ENCODE measurements at regions of chr1 and their contacts with region 1.

Region 1: DNA sequence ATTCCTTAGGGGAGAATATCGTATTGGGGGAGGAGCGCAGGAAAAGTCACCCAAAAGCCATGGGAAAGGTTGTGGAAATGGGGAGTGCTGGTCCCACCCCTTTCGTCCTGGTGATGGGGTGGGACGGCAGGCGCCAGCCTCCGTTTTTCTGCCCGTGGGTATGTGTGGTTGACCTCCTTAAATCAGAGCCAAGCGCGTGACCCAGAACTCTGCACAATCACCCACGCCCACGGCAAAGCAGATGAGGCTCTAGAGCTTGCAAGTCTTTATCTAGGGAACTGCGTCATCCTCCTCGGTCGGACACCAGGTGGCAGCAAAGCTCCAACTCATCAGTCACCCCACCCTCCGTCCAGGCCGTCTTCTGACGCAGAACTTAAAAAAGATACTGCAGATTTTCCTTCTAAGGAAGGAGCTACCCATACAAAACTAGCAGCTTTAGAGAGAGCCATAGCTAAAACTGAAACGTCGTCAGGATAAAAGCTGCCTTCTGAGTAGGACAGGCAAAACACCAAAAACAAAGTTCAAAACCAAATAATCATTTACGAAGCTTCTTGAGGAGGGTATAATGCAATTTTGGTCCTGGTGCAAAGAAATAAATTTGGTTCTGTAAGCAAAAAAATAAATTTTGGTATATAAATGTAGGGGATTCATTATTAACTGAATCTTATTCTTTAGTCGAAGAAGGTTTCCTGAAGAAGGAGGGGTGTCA is 62.0 kb downstream of the TBX19 start:
- DNase-seq: peak; percentile 97
- H3K4me3 ChIP-seq: peak overlapping the region in 3 of 4 donors; percentile 2 to 32 (median 20)
- H3K27ac ChIP-seq: peak overlapping the region; percentile 48 to 72 (median 61)
- H3K4me1 ChIP-seq: peaks cover 0 to 26% (median 19%) of the 10 kb centered on the region in 4 donors
- H3K27me3 ChIP-seq: no peaks in the 10 kb centered on the region
- CTCF ChIP-seq: peak; percentile 70 to 82 (median 76)
- EP300 ChIP-seq: no peak
- POLR2A ChIP-seq: no peak

Region 2: DNA sequence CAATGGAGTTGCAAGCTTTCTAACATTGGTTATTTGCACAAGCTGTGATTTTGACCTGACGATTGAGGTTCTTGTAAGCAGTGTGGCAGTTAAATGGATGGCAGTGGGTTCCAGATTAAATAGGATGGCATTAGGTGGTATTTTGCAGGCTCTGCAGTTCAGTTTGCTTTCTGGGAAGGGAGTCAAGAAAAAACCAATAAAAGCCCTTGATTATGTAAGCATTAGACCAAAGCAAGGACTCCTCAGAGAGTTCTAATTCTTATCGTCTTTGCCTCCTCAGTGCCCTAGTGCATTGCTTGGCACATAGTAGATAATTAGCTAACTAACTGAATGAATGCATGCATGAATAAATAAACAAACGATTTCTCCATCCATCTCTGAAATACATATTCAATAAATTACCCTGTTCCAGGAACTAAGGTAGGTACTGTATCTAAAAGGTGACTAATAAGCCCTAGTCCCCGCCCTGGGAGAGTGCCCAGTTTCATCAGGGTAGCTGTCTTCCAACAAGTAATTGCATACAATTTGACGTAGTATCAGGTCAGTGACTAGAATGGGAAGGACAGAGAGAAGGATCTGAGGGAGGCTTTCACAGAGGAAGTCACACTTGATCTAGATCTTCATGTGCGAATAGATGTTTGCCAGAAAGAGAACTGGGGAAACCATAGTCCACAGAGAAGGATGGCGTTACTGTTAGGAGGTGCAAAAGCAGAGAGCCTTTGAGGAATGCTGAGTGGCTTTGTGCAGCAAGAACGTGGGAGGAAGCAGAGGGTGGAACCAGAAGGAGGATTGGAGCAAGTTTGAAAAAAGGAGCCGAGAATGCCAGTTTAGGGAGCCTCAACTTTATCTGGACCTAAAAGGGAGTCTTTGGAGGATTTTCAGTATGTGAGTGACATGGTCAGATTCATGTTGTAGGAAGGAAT is 49.3 kb after region 1 on chr1:
- intact Hi-C with region 1: no loop called
- DNase-seq: peak; percentile 86
- H3K4me3 ChIP-seq: no peak overlapping the region
- H3K27ac ChIP-seq: peak overlapping the region in 3 of 4 donors; percentile 57 to 68 (median 60)
- H3K4me1 ChIP-seq: peaks cover 0 to 41% (median 30%) of the 10 kb centered on the region in 4 donors
- H3K27me3 ChIP-seq: no peaks in the 10 kb centered on the region
- CTCF ChIP-seq: no peak
- EP300 ChIP-seq: no peak
- POLR2A ChIP-seq: no peak

Region 3: DNA sequence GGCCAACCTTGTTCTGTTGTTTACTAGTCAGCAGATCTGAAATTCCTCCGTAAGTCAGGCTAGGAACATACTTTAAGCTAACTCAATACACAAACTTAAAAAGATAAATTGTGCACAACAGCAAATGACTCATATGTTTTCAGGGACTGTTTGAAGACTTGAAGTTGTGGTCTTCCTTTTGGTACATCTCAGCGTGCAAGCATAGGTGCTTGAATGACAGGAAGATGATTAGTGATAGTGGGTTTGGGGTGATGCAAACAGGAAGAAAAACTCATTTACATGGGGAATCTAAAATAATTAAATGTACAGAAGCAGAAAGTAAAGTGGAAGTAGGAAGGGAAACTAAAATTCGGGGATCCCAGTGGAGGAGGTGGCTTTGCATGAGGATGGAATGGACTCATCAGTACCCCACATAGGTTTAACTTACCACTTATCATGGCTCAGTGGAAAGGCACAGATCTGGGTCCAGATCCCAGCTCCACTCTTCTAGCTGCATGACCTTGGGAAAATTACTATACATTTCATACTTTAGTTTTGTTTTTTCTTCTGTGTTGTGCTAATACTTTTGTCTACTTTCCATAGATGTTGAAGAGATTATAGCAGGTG is 78.8 kb after region 1 on chr1:
- intact Hi-C with region 1: no loop called
- DNase-seq: no peak
- H3K4me3 ChIP-seq: no peak overlapping the region
- H3K27ac ChIP-seq: no peak overlapping the region
- H3K4me1 ChIP-seq: peaks cover 0 to 8% (median 7%) of the 10 kb centered on the region in 4 donors
- H3K27me3 ChIP-seq: no peaks in the 10 kb centered on the region
- CTCF ChIP-seq: no peak
- EP300 ChIP-seq: no peak
- POLR2A ChIP-seq: no peak

Region 4: DNA sequence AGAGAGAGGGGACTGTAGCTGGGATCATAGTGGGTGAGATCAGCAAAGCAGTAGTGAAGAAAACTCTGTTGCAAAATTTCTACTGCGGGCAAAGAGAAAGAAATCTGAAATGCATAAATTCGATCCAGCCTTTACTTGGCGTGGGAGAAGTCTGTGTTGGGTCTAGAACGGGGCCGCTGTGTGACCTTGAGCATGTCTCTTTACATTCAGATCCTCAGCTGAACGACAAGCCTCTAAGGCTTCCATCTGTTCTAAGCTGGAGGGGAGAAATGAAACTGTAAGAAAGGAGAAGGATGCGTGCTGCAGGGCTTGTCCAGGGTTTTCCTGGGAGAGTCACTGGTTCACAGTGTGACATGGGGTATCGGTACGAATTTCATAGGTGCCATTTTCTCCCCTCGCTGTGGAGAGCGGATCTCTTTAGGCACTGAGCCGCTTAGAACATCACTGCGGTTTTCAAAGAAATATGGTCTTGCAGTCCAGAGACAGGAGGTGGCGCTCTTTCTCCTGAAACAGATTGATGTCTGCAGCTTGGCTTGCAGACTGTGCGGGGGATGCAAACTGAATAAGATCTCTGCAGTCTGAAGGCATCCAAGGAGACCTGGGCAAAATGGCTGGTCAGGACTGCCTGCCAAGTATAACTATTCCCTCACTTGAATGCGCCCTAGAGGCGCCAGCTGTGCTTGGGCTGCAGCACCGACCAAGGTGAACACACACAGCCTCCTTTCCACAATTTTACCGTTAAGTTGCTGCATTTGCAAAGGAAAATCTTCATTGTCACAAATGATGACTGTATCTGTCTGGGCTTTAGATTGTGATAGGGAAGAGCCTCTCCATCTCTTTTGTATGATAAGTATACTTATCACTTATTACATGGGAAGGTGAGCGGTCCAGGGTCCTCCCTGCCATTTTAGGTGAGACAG is 97.0 kb after region 1 on chr1:
- intact Hi-C with region 1: loop called (anchors 5 kb)
- DNase-seq: peak; percentile 87
- H3K4me3 ChIP-seq: peak overlapping the region in 2 of 4 donors; percentile 8 to 20
- H3K27ac ChIP-seq: peak overlapping the region in 1 of 4 donors; percentile 29
- H3K4me1 ChIP-seq: peaks cover 0 to 22% (median 10%) of the 10 kb centered on the region in 4 donors
- H3K27me3 ChIP-seq: no peaks in the 10 kb centered on the region
- CTCF ChIP-seq: peak; percentile 67 to 77 (median 72)
- EP300 ChIP-seq: no peak
- POLR2A ChIP-seq: no peak

Region 5: GRCh38 chr1:168572633-168573032 is 229.9 kb after region 1 on chr1:
- intact Hi-C with region 1: loop called (anchors 5 kb)
- DNase-seq: no peak
- H3K4me3 ChIP-seq: no peak overlapping the region
- H3K27ac ChIP-seq: no peak overlapping the region
- H3K4me1 ChIP-seq: no peaks in the 10 kb centered on the region
- H3K27me3 ChIP-seq: no peaks in the 10 kb centered on the region
- CTCF ChIP-seq: no peak
- EP300 ChIP-seq: no peak
- POLR2A ChIP-seq: no peak

Region 6: GRCh38 chr1:168783458-168784230 is 440.9 kb after region 1 on chr1:
- intact Hi-C with region 1: loop called (anchors 10 kb)
- DNase-seq: peak; percentile 65
- H3K4me3 ChIP-seq: no peak overlapping the region
- H3K27ac ChIP-seq: peak overlapping the region; percentile 34 to 62 (median 58)
- H3K4me1 ChIP-seq: peaks cover 0 to 18% (median 7%) of the 10 kb centered on the region in 4 donors
- H3K27me3 ChIP-seq: no peaks in the 10 kb centered on the region
- CTCF ChIP-seq: no peak
- EP300 ChIP-seq: no peak
- POLR2A ChIP-seq: no peak

Region 7: DNA sequence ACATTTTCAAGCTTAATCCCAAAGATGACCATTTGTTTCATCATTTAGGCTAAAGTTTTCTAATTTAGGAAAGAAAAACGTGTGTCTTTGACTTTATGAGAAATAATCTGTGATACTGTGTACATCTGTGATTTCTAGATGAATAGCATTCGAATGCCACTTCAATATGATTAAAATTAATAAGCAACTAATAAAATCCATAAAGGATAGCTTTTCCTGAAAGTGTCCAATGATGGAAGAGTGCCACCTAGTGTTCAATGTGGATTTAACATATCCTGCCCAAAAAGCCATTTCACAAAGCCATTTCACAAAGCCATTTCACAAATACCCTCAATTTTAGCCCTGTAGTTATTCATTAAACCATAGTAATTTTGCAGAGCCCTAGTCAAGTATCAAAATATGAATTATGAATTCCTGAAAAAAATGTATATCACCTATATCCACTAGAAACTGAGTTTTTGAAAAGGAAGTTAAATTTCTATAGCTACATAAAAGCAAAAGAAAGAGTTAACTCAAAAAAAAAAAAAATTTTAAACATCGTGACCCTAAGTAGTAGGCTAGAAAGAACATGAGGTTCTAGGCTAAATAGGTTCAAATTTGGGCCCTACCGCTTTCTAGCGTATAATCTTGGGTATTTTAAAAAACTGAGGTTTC is 1005.8 kb after region 1 on chr1:
- intact Hi-C with region 1: loop called (anchors 5 kb)
- DNase-seq: no peak
- H3K4me3 ChIP-seq: no peak overlapping the region
- H3K27ac ChIP-seq: no peak overlapping the region
- H3K4me1 ChIP-seq: peaks cover 0 to 16% (median 3%) of the 10 kb centered on the region in 4 donors
- H3K27me3 ChIP-seq: no peaks in the 10 kb centered on the region
- CTCF ChIP-seq: peak; percentile 46 to 78 (median 68)
- EP300 ChIP-seq: no peak
- POLR2A ChIP-seq: no peak

Region 8: DNA sequence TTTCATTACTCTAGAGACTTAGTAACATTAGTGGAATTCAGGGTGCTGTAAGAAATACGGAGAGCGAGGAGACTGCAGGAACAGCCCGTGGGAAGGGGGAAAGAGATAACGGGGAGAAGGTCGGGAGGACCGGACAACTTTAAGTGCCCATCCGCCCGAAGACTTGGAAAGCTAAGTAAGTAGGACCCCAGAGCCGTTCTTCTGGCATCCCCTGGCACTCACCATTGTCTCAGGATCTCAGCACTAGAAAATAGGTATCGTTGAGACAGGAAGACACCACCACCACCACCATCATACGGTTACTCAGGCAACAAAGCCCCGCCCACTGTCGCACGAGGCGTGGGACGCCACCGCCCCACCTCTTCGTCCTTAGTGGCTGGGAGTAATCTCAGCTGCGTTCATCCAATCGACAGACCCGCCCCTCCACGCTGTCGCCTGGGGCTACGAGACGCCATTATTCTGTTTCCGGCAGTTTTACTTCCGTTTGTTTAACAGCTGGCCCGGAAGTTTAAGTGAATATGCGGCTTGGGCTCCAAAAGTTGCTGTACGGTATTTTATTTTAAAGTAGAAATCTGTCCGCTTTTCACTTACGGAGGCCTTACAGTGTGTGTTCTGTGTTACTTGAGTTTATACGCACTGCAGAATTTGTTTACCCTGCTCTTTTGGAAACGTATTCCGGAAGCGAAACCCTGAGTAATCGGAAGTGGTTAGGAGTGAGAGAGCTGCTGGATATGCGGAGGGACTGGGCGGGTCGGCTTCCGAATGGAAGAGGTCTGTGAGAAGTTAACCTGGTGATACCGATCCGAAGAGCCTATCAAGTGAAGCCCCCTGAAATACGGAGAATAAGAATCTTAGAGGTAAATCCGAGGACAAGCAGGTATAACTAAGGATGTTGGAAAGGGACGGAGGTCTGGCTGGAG is 1025.0 kb after region 1 on chr1 and contains the starts of genes BLZF1 and NME7:
- intact Hi-C with region 1: loop called (anchors 5 kb)
- DNase-seq: peak; percentile 98
- H3K4me3 ChIP-seq: peak within 1 kb of the TSS; percentile 59 to 72 (median 66)
- H3K27ac ChIP-seq: peak within 1 kb of the TSS; percentile 78 to 83 (median 82)
- H3K4me1 ChIP-seq: peaks cover 2 to 33% (median 26%) of the 10 kb centered on the region in 4 donors
- H3K27me3 ChIP-seq: no peaks in the 10 kb centered on the region
- CTCF ChIP-seq: no peak
- EP300 ChIP-seq: peak in 1 of 4 donors; percentile 32
- POLR2A ChIP-seq: peak in 1 of 2 donors; percentile 43
- total RNA-seq, gene BLZF1: 31.0 to 49.5 (median 38.7) TPM
- total RNA-seq, gene NME7: 20.1 to 39.9 (median 32.1) TPM

Region 9: GRCh38 chr1:169546087-169546995 is 1203.6 kb after region 1 on chr1:
- intact Hi-C with region 1: loop called (anchors 5 kb)
- DNase-seq: peak; percentile 73
- H3K4me3 ChIP-seq: no peak overlapping the region
- H3K27ac ChIP-seq: no peak overlapping the region
- H3K4me1 ChIP-seq: no peaks in the 10 kb centered on the region
- H3K27me3 ChIP-seq: no peaks in the 10 kb centered on the region
- CTCF ChIP-seq: peak; percentile 76 to 84 (median 78)
- EP300 ChIP-seq: no peak
- POLR2A ChIP-seq: no peak

Measured in sigmoid colon (tissue), 7 donors.